Prostate gland (tissue), 2 donors: ENCODE measurements at regions of chr19 and their contacts with region 1.

Region 1: DNA sequence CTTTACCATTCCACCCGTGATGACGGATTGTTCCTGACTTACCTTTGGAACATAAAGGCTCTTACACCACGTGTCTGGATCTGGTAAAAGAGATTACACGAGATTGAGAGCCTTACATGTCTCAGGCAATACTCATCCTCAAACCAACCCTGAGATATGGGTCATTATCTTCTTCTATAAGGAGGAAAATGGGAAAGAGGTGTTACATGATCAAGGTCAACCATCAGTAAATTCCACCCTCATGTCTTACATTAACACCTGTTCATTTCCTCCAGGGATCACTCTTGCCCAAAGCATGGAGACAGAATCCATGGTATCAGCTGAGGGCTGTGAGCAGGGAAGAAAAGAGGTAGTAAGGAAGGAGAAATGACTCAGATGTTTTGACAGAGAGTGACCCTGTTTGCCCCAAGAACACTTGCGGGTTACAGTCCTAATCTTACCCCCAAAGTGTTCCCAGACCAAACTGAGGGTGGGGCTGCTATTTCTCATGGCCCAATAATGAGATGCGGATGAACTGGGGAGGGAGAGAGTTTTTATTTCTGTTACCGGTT is 19.6 kb downstream of the LILRB4 start:
- DNase-seq: no peak
- H3K4me3 ChIP-seq: no peak overlapping the region
- H3K27ac ChIP-seq: no peak overlapping the region
- H3K4me1 ChIP-seq: no peaks in the 10 kb centered on the region
- H3K27me3 ChIP-seq: peaks cover 3% of the 10 kb centered on the region
- CTCF ChIP-seq: no peak
- POLR2A ChIP-seq: no peak

Region 2: DNA sequence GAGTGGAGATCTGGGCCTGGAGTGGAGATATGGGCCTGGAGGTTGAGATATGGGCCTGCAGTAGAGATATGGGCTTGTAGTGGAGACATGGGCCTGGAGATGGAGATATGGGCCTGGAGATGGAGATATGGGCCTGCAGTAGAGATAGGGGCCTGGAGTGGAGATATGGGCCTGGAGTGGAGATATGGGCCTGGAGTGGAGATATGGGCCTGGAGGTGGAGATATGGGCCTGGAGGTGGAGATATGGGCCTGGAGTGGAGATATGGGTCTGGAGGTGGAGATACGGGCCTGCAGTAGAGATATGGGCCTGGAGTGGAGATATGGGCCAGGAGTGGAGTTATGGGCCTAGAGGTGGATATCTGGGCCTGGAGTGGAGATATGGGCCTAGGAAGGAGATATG is 56.3 kb after region 1 on chr19:
- intact Hi-C with region 1: loop called (anchors 2 kb)
- DNase-seq: no peak
- H3K4me3 ChIP-seq: no peak overlapping the region
- H3K27ac ChIP-seq: no peak overlapping the region
- H3K4me1 ChIP-seq: no peaks in the 10 kb centered on the region
- H3K27me3 ChIP-seq: no peaks in the 10 kb centered on the region
- CTCF ChIP-seq: no peak
- POLR2A ChIP-seq: no peak